Sigmoid colon (tissue), 7 donors: ENCODE measurements at regions of chr7 and their contacts with region 1.

Region 1: GRCh38 chr7:30412810-30413504 is 65.6 kb downstream of the NOD1 start:
- DNase-seq: no peak
- H3K4me3 ChIP-seq: no peak overlapping the region
- H3K27ac ChIP-seq: no peak overlapping the region
- H3K4me1 ChIP-seq: peaks cover 0 to 4% (median 0%) of the 10 kb centered on the region in 4 donors
- H3K27me3 ChIP-seq: no peaks in the 10 kb centered on the region
- CTCF ChIP-seq: peak; percentile 36 to 47 (median 44)
- EP300 ChIP-seq: no peak
- POLR2A ChIP-seq: no peak

Region 2: GRCh38 chr7:30164567-30164966 is 248.4 kb before region 1 on chr7:
- intact Hi-C with region 1: loop called (anchors 2 kb)
- DNase-seq: no peak
- H3K4me3 ChIP-seq: no peak overlapping the region
- H3K27ac ChIP-seq: peak overlapping the region in 1 of 4 donors; percentile 45
- H3K4me1 ChIP-seq: peaks cover 0 to 22% (median 0%) of the 10 kb centered on the region in 4 donors
- H3K27me3 ChIP-seq: no peaks in the 10 kb centered on the region
- CTCF ChIP-seq: peak in 3 of 4 experiments; percentile 32 to 45 (median 42)
- EP300 ChIP-seq: no peak
- POLR2A ChIP-seq: no peak

Region 3: GRCh38 chr7:30274641-30275040 is 138.3 kb before region 1 on chr7:
- intact Hi-C with region 1: loop called (anchors 2 kb)
- DNase-seq: no peak
- H3K4me3 ChIP-seq: no peak overlapping the region
- H3K27ac ChIP-seq: no peak overlapping the region
- H3K4me1 ChIP-seq: no peaks in the 10 kb centered on the region
- H3K27me3 ChIP-seq: no peaks in the 10 kb centered on the region
- CTCF ChIP-seq: no peak
- EP300 ChIP-seq: no peak
- POLR2A ChIP-seq: no peak

Region 4: GRCh38 chr7:30348083-30348560 is 64.8 kb before region 1 on chr7:
- intact Hi-C with region 1: loop called (anchors 5 kb)
- DNase-seq: no peak
- H3K4me3 ChIP-seq: no peak overlapping the region
- H3K27ac ChIP-seq: peak overlapping the region in 2 of 4 donors; percentile 12 to 23
- H3K4me1 ChIP-seq: peaks cover 0 to 36% (median 8%) of the 10 kb centered on the region in 4 donors
- H3K27me3 ChIP-seq: no peaks in the 10 kb centered on the region
- CTCF ChIP-seq: no peak
- EP300 ChIP-seq: no peak
- POLR2A ChIP-seq: no peak

Region 5: GRCh38 chr7:30531286-30531685 is 118.3 kb after region 1 on chr7:
- intact Hi-C with region 1: no loop called
- DNase-seq: no peak
- H3K4me3 ChIP-seq: no peak overlapping the region
- H3K27ac ChIP-seq: no peak overlapping the region
- H3K4me1 ChIP-seq: no peaks in the 10 kb centered on the region
- H3K27me3 ChIP-seq: no peaks in the 10 kb centered on the region
- CTCF ChIP-seq: no peak
- EP300 ChIP-seq: no peak
- POLR2A ChIP-seq: no peak